Ovary (tissue), 10 donors: ENCODE measurements at regions of chr2 and their contacts with region 1.

Region 1: GRCh38 chr2:239472235-239472775 is 71.5 kb upstream of the HDAC4 start:
- DNase-seq: peak in 1 of 5 donors; percentile 2
- H3K4me3 ChIP-seq: no peak overlapping the region
- H3K27ac ChIP-seq: no peak overlapping the region
- H3K4me1 ChIP-seq: no peaks in the 10 kb centered on the region
- H3K27me3 ChIP-seq: no peaks in the 10 kb centered on the region
- CTCF ChIP-seq: no peak
- EP300 ChIP-seq: no peak
- POLR2A ChIP-seq: no peak

Region 2: GRCh38 chr2:239561446-239562001 is 89.2 kb after region 1 on chr2:
- intact Hi-C with region 1: no loop called
- DNase-seq: peak; percentile 19 to 69 (median 44)
- H3K4me3 ChIP-seq: no peak overlapping the region
- H3K27ac ChIP-seq: no peak overlapping the region
- H3K4me1 ChIP-seq: no peaks in the 10 kb centered on the region
- H3K27me3 ChIP-seq: no peaks in the 10 kb centered on the region
- CTCF ChIP-seq: no peak
- EP300 ChIP-seq: no peak
- POLR2A ChIP-seq: no peak

Region 3: GRCh38 chr2:240339996-240340761 is 867.9 kb after region 1 on chr2:
- intact Hi-C with region 1: loop called in 1 of 4 experiments (anchors 5 kb)
- DNase-seq: no peak
- H3K4me3 ChIP-seq: no peak overlapping the region
- H3K27ac ChIP-seq: no peak overlapping the region
- H3K4me1 ChIP-seq: no peaks in the 10 kb centered on the region
- H3K27me3 ChIP-seq: no peaks in the 10 kb centered on the region
- CTCF ChIP-seq: no peak
- EP300 ChIP-seq: no peak
- POLR2A ChIP-seq: no peak